Breast epithelium (tissue), 4 donors: ENCODE measurements at regions of chr7 and their contacts with region 1.

Region 1: GRCh38 chr7:77667459-77668086 is 28.7 kb upstream of the RSBN1L start:
- DNase-seq: no peak
- H3K4me3 ChIP-seq: no peak overlapping the region
- H3K27ac ChIP-seq: no peak overlapping the region
- H3K4me1 ChIP-seq: no peaks in the 10 kb centered on the region
- H3K27me3 ChIP-seq: no peaks in the 10 kb centered on the region
- CTCF ChIP-seq: no peak
- POLR2A ChIP-seq: no peak

Region 2: GRCh38 chr7:77351539-77352004 is 316.0 kb before region 1 on chr7:
- intact Hi-C with region 1: no loop called
- DNase-seq: peak in 1 of 2 donors; percentile 21
- H3K4me3 ChIP-seq: no peak overlapping the region
- H3K27ac ChIP-seq: no peak overlapping the region
- H3K4me1 ChIP-seq: no peaks in the 10 kb centered on the region
- H3K27me3 ChIP-seq: no peaks in the 10 kb centered on the region
- CTCF ChIP-seq: no peak
- POLR2A ChIP-seq: no peak

Region 3: DNA sequence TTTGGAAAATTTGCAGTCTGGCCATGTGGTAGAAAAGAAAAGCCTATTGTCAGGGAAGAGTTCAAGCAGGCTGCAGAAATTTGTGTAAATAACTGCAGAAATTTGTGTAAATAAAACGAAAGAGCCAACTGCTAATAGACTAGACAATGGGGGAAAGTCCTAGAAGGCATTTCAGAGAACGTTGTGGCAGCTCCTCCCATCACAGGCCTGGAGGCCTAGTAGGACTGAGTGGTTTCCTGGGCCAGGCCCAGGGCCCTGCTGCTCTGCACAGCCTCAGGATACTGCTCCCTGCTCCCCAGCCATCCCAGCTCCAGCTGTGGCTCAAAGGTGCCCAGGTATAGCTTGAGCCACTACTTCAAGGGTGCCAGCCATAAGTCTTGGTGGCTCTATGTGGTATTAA is 79.6 kb after region 1 on chr7:
- intact Hi-C with region 1: loop called (anchors 10 kb)
- DNase-seq: no peak
- H3K4me3 ChIP-seq: no peak overlapping the region
- H3K27ac ChIP-seq: no peak overlapping the region
- H3K4me1 ChIP-seq: no peaks in the 10 kb centered on the region
- H3K27me3 ChIP-seq: no peaks in the 10 kb centered on the region
- CTCF ChIP-seq: no peak
- POLR2A ChIP-seq: no peak